Transverse colon (tissue), 4 donors: ENCODE measurements at regions of chr13 and their contacts with region 1.

Region 1: DNA sequence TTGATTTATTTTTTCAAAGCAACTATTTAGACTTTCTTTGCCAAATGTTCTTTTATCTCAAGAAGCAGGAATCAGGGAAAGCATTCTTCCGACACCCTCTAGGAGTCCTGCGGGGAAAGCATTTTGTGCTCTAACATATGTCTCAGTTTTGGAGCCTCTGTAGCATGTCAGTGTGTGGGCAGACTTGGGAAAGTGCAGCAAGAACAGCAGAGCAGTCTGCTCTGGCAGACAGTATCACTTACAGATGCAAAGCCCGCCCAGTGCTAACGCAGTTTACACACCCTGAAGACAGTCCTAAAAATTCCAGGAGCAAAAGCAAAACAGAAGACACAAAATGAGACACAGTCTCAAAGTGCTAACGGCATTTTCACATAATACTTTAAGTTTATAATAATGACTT is 393.5 kb downstream of the KLF12 start:
- DNase-seq: no peak
- H3K4me3 ChIP-seq: peak overlapping the region in 1 of 4 donors; percentile 7
- H3K27ac ChIP-seq: peak overlapping the region in 1 of 4 donors; percentile 9
- H3K4me1 ChIP-seq: no peaks in the 10 kb centered on the region
- H3K27me3 ChIP-seq: no peaks in the 10 kb centered on the region
- CTCF ChIP-seq: no peak
- EP300 ChIP-seq: no peak
- POLR2A ChIP-seq: no peak

Region 2: DNA sequence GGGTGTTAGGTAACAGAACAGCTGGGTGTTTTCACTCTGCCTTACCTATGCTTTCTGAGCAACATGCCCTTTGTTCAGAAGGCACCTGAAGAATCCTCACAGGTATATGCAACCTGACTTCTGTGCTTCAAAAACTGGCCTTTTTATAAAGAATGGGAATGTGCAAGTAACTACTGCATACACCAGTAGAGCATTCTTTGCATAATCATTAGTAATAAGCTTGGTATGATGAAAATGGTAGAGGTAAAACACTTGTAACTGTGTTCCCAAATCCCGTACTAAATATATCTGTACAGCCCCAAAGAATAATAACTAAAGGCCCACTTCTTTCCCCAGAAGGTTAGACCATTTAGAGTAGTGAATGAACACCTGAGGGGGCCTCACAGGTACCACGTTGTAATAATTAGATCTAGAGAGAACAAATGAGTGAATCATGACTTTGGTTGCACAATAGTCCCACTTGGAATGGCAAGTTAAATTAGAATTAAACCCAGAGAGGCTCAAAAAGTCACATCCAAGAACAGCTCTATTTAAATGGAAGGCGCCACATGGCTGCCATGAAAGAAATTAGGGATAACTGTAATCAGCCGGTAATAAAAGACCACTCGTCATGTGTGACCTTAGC is 20.3 kb before region 1 on chr13:
- in situ Hi-C with region 1: no loop called
- intact Hi-C with region 1: loop called (anchors 1 kb)
- DNase-seq: no peak
- H3K4me3 ChIP-seq: no peak overlapping the region
- H3K27ac ChIP-seq: no peak overlapping the region
- H3K4me1 ChIP-seq: peaks cover 0 to 28% (median 7%) of the 10 kb centered on the region in 4 donors
- H3K27me3 ChIP-seq: no peaks in the 10 kb centered on the region
- CTCF ChIP-seq: no peak
- EP300 ChIP-seq: no peak
- POLR2A ChIP-seq: no peak